ENCODE measurements at regions of chr2 and their contacts with region 1.

Region 1: DNA sequence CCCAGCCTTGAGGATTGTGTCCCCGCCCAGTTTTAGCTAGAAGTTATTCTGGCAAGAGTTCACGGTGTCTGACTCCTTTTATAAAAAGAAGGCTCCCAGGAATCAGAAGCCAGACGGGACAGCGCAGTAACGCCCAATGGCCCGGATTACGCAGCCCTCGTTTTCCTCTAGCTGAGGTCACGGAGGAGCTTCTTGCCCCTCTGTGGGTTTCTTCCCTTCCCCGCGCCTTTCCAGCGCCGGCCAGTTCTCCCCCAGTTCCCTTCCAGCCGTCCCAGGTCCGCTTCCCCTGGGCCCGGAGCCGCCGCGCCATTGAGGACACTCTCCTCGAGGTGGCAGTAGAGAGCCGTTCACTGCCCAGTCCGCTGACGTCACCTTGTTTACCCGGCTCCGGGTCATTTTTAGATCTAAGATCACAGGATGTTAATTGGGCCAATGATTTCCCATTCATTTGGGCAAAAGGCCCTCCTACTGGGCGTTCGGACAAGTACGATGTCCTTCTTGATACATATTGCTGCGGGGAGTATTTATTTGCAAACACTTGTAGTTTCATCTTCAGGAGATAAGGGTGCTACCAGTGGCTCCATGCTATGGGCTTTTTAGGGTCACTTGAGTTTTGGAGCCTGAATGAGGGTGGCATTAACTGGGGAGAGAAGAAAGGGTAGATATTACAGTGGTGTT is 81.5 kb upstream of the PPM1B start:
- DNase-seq: peak; percentile 86 to 90
- ATAC-seq: peak; percentile 93 to 98 (median 96)
- H3K4me3 ChIP-seq: peak overlapping the region in 9 of 10 donors; percentile 8 to 53 (median 41)
- H3K27ac ChIP-seq: peak overlapping the region in 8 of 10 donors; percentile 4 to 71 (median 63)
- H3K4me1 ChIP-seq: peaks cover 0 to 16% (median 11%) of the 10 kb centered on the region in 9 donors
- H3K27me3 ChIP-seq: no peaks in the 10 kb centered on the region
- CTCF ChIP-seq: peak; percentile 94 to 100 (median 98)

Region 2: GRCh38 chr2:44167940-44168680 is 80.9 kb after region 1 on chr2:
- intact Hi-C with region 1: loop called in 6 of 10 experiments (anchors 2 to 10 kb)
- DNase-seq: peak; percentile 94 to 100
- ATAC-seq: peak; percentile 89 to 97 (median 94)
- H3K4me3 ChIP-seq: peak overlapping the region; percentile 22 to 72 (median 57)
- H3K27ac ChIP-seq: peak overlapping the region; percentile 87 to 99 (median 96)
- H3K4me1 ChIP-seq: peaks cover 0 to 41% (median 33%) of the 10 kb centered on the region in 9 donors
- H3K27me3 ChIP-seq: peaks cover 0 to 9% (median 0%) of the 10 kb centered on the region in 7 donors
- CTCF ChIP-seq: no peak

Region 3: GRCh38 chr2:44233450-44234128 is 146.4 kb after region 1 on chr2:
- intact Hi-C with region 1: loop called in 1 of 10 experiments (anchors 10 kb)
- DNase-seq: no peak
- ATAC-seq: no peak
- H3K4me3 ChIP-seq: no peak overlapping the region
- H3K27ac ChIP-seq: no peak overlapping the region
- H3K4me1 ChIP-seq: peaks cover 0 to 8% (median 0%) of the 10 kb centered on the region in 9 donors
- H3K27me3 ChIP-seq: no peaks in the 10 kb centered on the region
- CTCF ChIP-seq: no peak

Region 4: DNA sequence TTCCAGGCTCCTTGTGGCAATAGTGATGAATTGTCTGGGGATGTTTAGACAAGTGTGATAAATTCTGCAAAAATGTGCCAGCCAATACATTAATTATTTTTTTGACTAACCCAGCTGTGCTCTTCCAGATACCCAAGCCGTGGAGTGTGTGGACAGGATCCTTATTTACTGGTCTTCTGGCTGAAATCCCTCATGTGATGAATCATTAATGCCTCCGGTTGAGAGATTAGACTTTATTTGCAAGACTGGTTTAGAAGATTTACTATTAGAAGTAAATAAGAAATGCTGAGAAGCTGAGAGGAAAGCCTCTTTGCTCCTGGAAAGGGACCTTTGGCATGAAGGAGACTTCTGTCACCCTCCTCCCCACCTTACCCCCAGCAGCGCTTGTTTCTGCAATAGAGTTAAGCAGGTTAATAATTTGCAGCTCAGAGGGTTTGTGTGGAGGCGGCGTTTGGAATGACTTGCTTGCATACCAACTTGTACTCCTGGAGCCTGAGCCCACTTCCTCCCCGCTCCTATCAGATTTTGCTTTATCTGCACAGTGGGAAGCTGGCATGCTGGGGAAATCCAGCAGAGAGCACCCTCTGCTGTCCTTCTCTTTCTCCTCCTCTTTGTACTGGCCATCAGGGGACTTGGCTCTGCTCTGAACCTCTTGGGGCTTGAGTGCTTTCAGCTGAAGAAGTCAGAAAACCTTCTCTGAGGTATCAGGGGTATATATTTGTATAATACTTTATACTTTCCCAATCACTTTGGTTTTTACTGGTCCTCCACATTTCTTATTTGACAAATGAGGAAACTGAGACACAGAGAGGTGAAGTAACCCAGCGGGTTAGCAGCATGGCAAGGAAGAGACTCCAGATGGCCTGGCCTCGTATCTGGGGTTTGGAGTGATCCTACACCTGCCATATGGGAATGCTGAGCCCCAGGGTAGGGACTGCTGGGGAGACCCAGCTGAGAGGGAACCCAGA is 204.4 kb after region 1 on chr2:
- intact Hi-C with region 1: loop called in 4 of 10 experiments (anchors 5 kb)
- DNase-seq: no peak
- ATAC-seq: peak in 5 of 8 donors; percentile 53 to 82 (median 65)
- H3K4me3 ChIP-seq: no peak overlapping the region
- H3K27ac ChIP-seq: no peak overlapping the region
- H3K4me1 ChIP-seq: peaks cover 0 to 9% (median 4%) of the 10 kb centered on the region in 9 donors
- H3K27me3 ChIP-seq: no peaks in the 10 kb centered on the region
- CTCF ChIP-seq: peak in 8 of 9 donors; percentile 27 to 57 (median 49)

Region 5: DNA sequence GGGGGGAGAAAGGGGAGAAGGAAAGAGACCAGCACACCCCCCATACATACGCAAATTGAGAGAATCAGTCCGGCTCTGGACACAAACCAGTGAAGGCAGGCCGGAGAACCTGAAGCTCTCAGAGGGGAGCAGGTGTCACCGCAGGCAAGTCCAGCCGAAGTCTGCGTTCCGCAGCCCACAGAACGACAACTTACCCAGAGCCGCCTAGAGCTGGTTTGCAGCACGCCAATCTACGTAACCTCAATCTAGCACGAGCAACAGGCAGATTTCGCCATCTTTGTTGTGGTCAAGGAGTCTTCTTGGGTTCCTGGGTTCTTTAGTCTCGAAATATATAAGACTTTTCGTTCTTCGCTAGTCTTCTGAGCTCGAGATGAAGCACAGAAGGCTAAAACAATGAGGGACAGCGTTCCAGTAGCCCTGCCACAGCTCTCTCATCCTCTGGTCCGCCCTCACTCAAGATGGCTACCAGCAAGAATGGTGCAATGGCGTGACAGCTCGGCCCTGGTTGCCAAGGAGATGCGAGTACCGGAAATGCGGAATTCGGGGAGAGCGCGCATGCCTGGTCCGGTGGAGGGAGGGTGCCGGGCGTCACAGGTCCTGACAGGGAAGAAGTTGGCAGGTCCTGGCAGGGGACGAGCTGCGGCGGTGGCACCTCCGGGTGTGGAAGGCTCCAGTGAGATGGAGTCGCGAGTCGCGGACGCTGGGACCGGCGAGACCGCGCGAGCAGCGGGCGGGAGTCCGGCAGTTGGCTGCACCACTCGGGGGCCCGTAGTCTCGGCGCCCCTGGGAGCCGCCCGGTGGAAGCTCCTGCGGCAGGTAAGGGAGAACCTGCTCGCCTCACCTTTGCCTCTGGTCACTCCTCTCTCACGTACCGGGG is 274.4 kb after region 1 on chr2 and contains the starts of genes CAMKMT and PREPL:
- intact Hi-C with region 1: loop called in 2 of 10 experiments (anchors 5 to 10 kb)
- DNase-seq: peak; percentile 98 to 99
- ATAC-seq: peak; percentile 97 to 99 (median 98)
- H3K4me3 ChIP-seq: peak within 1 kb of the TSS; percentile 42 to 98 (median 88)
- H3K27ac ChIP-seq: peak within 1 kb of the TSS; percentile 93 to 99 (median 96)
- H3K4me1 ChIP-seq: peaks cover 0 to 44% (median 33%) of the 10 kb centered on the region in 9 donors
- H3K27me3 ChIP-seq: no peaks in the 10 kb centered on the region
- CTCF ChIP-seq: no peak
- total RNA-seq, gene CAMKMT: 4.1 to 6.4 (median 4.9) TPM
- total RNA-seq, gene PREPL: 69.1 to 132 (median 101) TPM